Panc1 (cell line): ENCODE measurements at regions of chr13 and their contacts with region 1.

Region 1: GRCh38 chr13:36736119-36736726 is 62.4 kb downstream of the SERTM1 start:
- DNase-seq: peak; percentile 13
- ATAC-seq: no peak
- H3K4me3 ChIP-seq: no peak overlapping the region
- H3K27ac ChIP-seq: no peak overlapping the region
- H3K4me1 ChIP-seq: no peaks in the 10 kb centered on the region
- H3K27me3 ChIP-seq: no peaks in the 10 kb centered on the region; the same call in 1 of the 2 replicates
- CTCF ChIP-seq: peak; percentile 65

Region 2: DNA sequence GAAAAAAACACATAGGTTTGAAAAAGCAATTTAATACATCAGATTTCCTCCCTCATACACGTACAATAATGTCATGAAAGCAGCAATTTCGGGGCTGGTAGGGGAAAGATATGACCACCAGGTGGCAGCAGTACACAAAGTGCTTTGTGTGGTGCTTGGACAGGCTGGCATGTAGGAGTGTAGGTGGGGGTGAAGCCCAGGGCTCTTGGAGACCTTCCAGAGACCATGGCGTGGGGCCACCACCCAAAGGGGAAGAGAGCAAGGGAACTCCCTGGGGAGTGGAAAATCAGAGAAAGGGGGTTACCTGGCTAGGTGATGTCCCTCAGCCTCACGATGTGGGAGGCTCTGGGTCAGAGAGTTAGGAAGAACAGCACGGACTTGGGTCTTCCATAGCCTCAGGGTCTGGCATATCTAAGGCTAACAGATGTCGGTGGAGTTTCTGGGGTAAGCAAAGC is 315.8 kb before region 1 on chr13:
- CTCF ChIA-PET with region 1: no interaction called
- POLR2A ChIA-PET with region 1: no interaction called
- in situ Hi-C with region 1: no loop called
- intact Hi-C with region 1: loop called (anchors 2 kb)
- DNase-seq: peak; percentile 18
- ATAC-seq: peak; percentile 89
- H3K4me3 ChIP-seq: no peak overlapping the region
- H3K27ac ChIP-seq: no peak overlapping the region
- H3K4me1 ChIP-seq: no peaks in the 10 kb centered on the region; the same call in 1 of the 2 replicates
- H3K27me3 ChIP-seq: no peaks in the 10 kb centered on the region
- CTCF ChIP-seq: peak; percentile 84

Region 3: DNA sequence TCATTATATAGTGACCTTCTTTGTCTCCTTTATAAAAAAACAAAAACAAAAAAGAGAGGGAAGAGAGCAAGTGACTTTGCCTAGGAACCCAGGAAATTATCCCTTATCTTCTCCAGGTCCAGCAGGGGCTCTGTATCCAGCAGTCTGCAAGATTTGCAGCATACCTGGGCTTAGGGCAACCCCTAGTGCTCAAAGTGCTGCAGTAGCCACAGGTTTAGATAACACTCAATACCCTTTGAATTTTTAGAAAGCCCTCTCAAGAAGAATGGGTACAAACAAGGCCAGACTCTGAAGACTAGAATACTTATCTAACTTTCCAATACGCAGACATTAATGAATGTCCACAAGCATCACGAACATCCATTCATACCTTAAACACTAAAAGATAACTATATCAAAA is 260.8 kb before region 1 on chr13:
- CTCF ChIA-PET with region 1: no interaction called
- POLR2A ChIA-PET with region 1: no interaction called
- in situ Hi-C with region 1: no loop called
- intact Hi-C with region 1: no loop called
- DNase-seq: no peak
- ATAC-seq: no peak
- H3K4me3 ChIP-seq: no peak overlapping the region
- H3K27ac ChIP-seq: no peak overlapping the region
- H3K4me1 ChIP-seq: no peaks in the 10 kb centered on the region
- H3K27me3 ChIP-seq: no peaks in the 10 kb centered on the region
- CTCF ChIP-seq: peak; percentile 14; the same call in 1 of the 2 replicates